Posterior cingulate gyrus (tissue), 11 donors: ENCODE measurements at regions of chr12 and their contacts with region 1.

Region 1: DNA sequence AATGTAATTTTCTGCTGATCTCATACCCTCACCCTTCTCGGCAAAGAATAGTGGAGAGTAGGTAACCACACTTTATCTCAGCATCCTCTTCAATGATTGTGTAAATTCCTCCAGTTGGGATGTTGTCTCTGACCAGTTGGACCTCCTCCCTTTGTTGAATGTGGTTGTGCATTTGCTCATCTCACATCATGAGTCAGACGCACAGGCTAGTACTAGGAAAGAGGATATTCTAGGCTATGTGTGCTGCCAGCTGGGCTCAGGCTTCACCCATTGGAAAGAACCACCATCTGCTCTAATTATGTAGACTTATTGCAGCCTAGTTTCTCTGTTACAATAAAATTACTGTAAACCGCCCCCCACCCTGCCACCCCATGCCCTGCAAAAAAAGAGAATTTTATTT is 90.3 kb downstream of the LMO3 start:
- DNase-seq: peak in 3 of 10 donors; percentile 10 to 82 (median 54)

Region 2: DNA sequence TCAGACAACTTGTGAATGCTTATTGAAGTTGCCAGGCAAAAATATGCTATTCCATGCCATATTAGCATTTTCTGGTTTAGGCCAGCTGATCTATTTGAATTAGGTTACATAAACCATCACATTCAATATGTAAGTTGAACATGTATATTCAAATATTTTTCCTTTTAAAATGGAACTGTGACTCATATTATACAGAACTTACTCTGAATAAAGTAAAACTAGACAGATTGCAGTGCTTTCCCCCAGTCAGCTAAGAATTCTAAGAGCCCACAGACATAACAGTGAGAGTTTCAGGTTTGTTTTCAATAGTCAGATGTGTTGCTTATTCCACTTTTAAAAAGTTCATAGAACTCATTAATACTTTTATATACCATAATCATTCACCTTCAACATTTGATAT is 48.4 kb before region 1 on chr12:
- intact Hi-C with region 1: loop called (anchors 1 kb)
- DNase-seq: no peak

Region 3: DNA sequence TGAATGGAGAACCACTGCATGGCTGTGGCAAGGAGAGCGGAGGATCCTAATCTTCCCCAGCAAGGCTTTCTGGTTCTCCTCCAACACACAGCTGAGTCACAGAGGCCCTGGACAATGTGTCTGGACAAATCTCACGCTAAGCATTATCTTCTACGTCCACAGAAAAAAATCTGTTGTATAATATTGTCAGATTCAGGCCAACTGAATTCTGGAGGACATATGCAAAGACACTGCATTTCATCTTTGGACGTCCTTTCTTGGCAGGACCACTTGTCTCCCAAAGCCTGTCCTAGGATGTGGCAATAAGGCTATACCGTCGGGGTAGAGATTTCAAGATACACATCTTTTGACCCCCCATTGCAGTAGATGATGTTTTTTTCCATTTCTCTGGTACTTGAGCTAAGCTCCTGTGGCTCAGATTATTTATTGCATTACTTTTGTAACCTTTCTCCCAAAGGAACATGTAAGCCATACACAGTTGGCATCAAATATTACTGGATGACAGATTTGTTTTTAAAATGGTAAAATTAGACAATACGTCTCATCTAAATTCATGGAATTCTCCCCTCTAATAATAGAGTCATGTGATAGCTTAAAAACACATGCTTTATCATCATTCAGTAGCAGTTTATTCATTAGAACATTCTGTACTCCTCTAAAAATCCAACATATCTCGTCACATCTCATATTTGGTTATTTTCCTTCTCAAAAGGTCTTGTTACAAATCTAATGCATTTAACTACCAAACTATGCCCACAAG is 70.9 kb after region 1 on chr12:
- intact Hi-C with region 1: no loop called
- DNase-seq: peak in 1 of 10 donors; percentile 82